ENCODE measurements at regions of chr2 and their contacts with region 1.

Region 1: GRCh38 chr2:30165050-30165520 is 18.3 kb downstream of the YPEL5 start:
- DNase-seq: peak; percentile 95
- ATAC-seq: peak; percentile 99
- H3K4me3 ChIP-seq: no peak overlapping the region
- H3K27ac ChIP-seq: no peak overlapping the region
- H3K4me1 ChIP-seq: no peaks in the 10 kb centered on the region
- H3K27me3 ChIP-seq: peaks cover 0 to 14% of the 10 kb centered on the region in 2 experiments; a peak in 2 of 5 replicates
- CTCF ChIP-seq: peak; percentile 83
- EP300 ChIP-seq: no peak
- POLR2A ChIP-seq: no peak
- RAD21 ChIP-seq: peak; percentile 78

Region 2: DNA sequence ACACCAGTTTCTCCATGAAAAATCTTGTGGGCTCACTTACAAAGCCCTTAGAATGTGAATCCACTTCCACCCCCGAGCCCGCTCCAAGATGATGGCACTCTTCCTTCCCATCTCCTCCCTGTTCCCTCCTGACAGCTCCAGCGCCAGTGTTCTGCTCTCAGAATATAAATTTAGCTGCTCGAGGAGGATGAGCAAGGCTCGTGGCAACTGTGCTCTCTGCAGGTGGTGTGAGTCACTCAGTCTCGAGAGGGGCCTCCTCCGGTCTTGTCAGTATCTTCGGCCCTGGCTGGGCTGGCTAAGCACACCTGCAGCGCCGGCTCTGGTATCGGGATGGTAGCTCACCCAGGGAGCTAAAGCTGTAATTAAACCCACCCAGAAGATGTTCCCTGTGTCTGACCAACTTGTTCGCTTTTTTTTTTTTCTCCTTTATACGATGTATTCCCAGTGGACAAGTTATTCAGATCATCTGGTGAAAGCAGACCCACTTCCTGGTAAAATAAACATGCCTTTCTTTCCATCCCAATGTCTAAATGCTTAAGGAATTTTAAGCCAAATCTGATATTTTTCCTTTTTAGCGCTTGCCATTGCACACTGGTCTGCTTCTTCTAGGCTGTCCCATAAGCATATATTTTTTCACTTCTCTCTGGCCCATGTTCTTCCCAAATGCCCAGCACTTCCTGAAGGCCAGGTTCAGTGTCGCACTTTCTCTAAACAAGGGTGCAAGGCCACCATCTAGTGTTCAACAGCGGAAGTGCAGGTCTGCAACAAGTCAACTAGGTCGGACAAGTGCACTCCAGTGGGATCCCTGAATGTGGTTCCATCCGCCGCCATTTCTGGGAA is 49.7 kb before region 1 on chr2:
- CTCF ChIA-PET with region 1: no interaction called
- POLR2A ChIA-PET with region 1: no interaction called
- in situ Hi-C with region 1: no loop called
- intact Hi-C with region 1: no loop called
- DNase-seq: peak; percentile 77
- ATAC-seq: peak; percentile 88
- H3K4me3 ChIP-seq: no peak overlapping the region
- H3K27ac ChIP-seq: no peak overlapping the region
- H3K4me1 ChIP-seq: peaks cover 13% of the 10 kb centered on the region
- H3K27me3 ChIP-seq: peaks cover 0 to 14% of the 10 kb centered on the region in 2 experiments; a peak in 3 of 5 replicates
- CTCF ChIP-seq: peak; percentile 97
- EP300 ChIP-seq: no peak
- POLR2A ChIP-seq: no peak
- RAD21 ChIP-seq: peak; percentile 92

Region 3: GRCh38 chr2:30146438-30147147 is 18.5 kb before region 1 on chr2 and contains the start of gene YPEL5:
- CTCF ChIA-PET with region 1: no interaction called
- POLR2A ChIA-PET with region 1: interaction called, 16 read pairs
- in situ Hi-C with region 1: no loop called
- intact Hi-C with region 1: no loop called
- DNase-seq: peak; percentile 98
- ATAC-seq: peak; percentile 98
- H3K4me3 ChIP-seq: peak within 1 kb of the TSS; percentile 85 to 96 (median 93)
- H3K27ac ChIP-seq: peak within 1 kb of the TSS; percentile 89
- H3K4me1 ChIP-seq: peaks cover 44% of the 10 kb centered on the region
- H3K27me3 ChIP-seq: peaks cover 2 to 4% of the 10 kb centered on the region in 2 experiments; a peak in 1 of 5 replicates
- CTCF ChIP-seq: no peak
- EP300 ChIP-seq: peak in 1 of 2 experiments; percentile 38; a peak in 2 of 4 replicates
- POLR2A ChIP-seq: peak; percentile 74 to 85
- RAD21 ChIP-seq: no peak
- total RNA-seq, gene YPEL5: 12.7 and 20.8 TPM in 2 replicates